PC-9 (cell line): ENCODE measurements at regions of chr17 and their contacts with region 1.

Region 1: GRCh38 chr17:40909351-40909750 is 24.3 kb upstream of the KRT20 start:
- DNase-seq: peak; percentile 79 to 92
- H3K4me3 ChIP-seq: 0 out of 2 replicates have a peak overlapping the region, but pooled peaks have one; percentile 16
- H3K27ac ChIP-seq: peak overlapping the region; percentile 95
- H3K4me1 ChIP-seq: peaks cover 66% of the 10 kb centered on the region
- H3K27me3 ChIP-seq: no peaks in the 10 kb centered on the region
- CTCF ChIP-seq: peak; percentile 86

Region 2: GRCh38 chr17:40615295-40615988 is 293.9 kb before region 1 on chr17:
- CTCF ChIA-PET with region 1: no interaction called
- POLR2A ChIA-PET with region 1: no interaction called
- intact Hi-C with region 1: loop called (anchors 2 kb)
- DNase-seq: peak; percentile 72
- H3K4me3 ChIP-seq: no peak overlapping the region
- H3K27ac ChIP-seq: no peak overlapping the region
- H3K4me1 ChIP-seq: peaks cover 10% of the 10 kb centered on the region
- H3K27me3 ChIP-seq: no peaks in the 10 kb centered on the region
- CTCF ChIP-seq: peak; percentile 73

Region 3: GRCh38 chr17:40854159-40854814 is 55.1 kb before region 1 on chr17:
- CTCF ChIA-PET with region 1: no interaction called
- POLR2A ChIA-PET with region 1: interaction called, 4 read pairs
- intact Hi-C with region 1: loop called (anchors 2 kb)
- DNase-seq: peak in 1 of 2 experiments; percentile 90
- H3K4me3 ChIP-seq: no peak overlapping the region
- H3K27ac ChIP-seq: peak overlapping the region; percentile 94
- H3K4me1 ChIP-seq: peaks cover 72% of the 10 kb centered on the region
- H3K27me3 ChIP-seq: no peaks in the 10 kb centered on the region
- CTCF ChIP-seq: no peak

Region 4: GRCh38 chr17:40952661-40953060 is 43.3 kb after region 1 on chr17:
- CTCF ChIA-PET with region 1: no interaction called
- POLR2A ChIA-PET with region 1: no interaction called
- intact Hi-C with region 1: no loop called
- DNase-seq: peak in 1 of 2 experiments; percentile 92
- H3K4me3 ChIP-seq: no peak overlapping the region
- H3K27ac ChIP-seq: peak overlapping the region; percentile 98
- H3K4me1 ChIP-seq: peaks cover 62% of the 10 kb centered on the region
- H3K27me3 ChIP-seq: no peaks in the 10 kb centered on the region
- CTCF ChIP-seq: no peak

Region 5: DNA sequence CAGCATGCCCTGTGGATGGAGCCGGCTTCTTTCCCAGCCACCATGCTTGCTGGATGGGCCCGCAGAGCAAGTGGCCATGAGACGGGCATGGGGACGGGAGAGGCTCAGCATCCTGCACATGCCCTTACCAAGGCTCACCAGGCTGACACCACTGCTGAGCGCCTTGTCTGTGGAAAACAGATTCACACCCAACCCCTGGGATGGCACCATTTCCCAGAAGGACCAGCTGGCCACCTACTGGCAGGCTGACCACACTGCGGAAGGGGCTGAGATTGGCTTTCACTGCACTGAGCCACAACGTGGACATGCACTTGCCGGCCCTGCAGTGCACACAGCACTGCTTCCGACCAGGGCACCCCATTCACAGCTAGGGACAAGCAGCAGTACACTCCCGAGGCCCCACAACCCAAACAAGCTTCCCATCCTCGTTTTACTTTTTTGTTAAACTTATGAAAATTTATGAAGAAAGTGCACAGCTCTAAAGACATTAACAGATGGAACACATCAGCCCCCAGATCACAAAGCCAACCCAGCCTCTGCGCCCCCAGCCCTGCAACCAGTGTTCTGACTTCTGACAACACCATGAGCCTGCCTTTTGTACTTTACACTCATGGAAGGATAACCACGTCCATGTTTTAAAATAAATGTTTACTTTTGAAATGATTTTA is 420.1 kb after region 1 on chr17:
- CTCF ChIA-PET with region 1: no interaction called
- POLR2A ChIA-PET with region 1: no interaction called
- intact Hi-C with region 1: loop called (anchors 1 kb)
- DNase-seq: peak; percentile 47 to 65
- H3K4me3 ChIP-seq: no peak overlapping the region
- H3K27ac ChIP-seq: no peak overlapping the region
- H3K4me1 ChIP-seq: peaks cover 6% of the 10 kb centered on the region
- H3K27me3 ChIP-seq: no peaks in the 10 kb centered on the region
- CTCF ChIP-seq: peak; percentile 90

Region 6: GRCh38 chr17:41417576-41418015 is 508.2 kb after region 1 on chr17:
- CTCF ChIA-PET with region 1: interaction called, 3 read pairs
- POLR2A ChIA-PET with region 1: no interaction called
- intact Hi-C with region 1: loop called (anchors 5 kb)
- DNase-seq: peak; percentile 69 to 98
- H3K4me3 ChIP-seq: no peak overlapping the region
- H3K27ac ChIP-seq: peak overlapping the region; percentile 89
- H3K4me1 ChIP-seq: peaks cover 76% of the 10 kb centered on the region
- H3K27me3 ChIP-seq: no peaks in the 10 kb centered on the region
- CTCF ChIP-seq: peak; percentile 82

Region 7: DNA sequence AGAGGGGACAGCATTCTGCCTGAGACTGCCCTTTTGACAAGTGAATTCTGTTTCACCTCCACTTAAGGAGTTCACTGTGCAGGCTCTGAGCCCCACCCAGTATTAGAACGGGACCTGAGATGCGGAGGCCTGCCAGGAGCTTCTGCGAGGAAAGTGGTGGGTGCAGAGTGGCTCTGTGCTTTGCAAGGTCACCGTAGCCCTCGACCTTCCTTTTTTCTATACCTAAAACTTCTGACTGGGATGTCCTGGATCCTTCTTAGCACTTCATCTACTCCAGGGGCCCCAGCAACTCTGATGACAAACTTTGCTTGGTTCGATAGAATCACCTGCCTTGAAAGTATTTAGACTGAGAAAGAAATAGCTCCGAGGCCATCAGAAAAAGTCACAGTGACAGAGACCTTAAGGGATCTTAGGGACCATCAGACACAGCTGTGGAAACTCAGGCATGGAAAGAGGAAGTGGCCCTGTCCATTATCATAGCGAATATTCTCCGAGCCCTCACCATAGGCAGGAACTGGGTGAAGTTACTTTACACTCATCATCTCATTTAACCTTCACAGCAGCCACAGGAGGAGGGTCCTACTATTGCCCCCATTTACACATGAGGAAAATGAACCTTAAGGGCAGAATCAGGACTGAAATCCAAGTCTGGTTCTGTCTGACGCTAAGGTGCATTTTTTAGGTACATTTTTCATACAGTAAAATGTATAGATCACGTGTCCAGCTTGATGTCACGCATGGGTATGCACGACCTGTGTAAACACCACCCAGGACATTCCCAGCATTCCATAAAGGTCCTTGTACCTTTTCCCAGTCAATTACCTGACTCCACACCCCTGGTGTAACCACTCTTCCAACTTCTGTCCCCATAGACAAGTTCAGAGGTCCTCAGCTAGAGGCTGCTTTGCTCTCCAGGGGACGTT is 596.7 kb after region 1 on chr17:
- CTCF ChIA-PET with region 1: no interaction called
- POLR2A ChIA-PET with region 1: interaction called, 12 read pairs
- intact Hi-C with region 1: no loop called
- DNase-seq: peak in 1 of 2 experiments; percentile 59
- H3K4me3 ChIP-seq: peak overlapping the region; percentile 58; the same call in 1 of the 2 replicates
- H3K27ac ChIP-seq: peak overlapping the region; percentile 94
- H3K4me1 ChIP-seq: peaks cover 84% of the 10 kb centered on the region
- H3K27me3 ChIP-seq: no peaks in the 10 kb centered on the region
- CTCF ChIP-seq: no peak

Region 8: GRCh38 chr17:41665566-41666236 is 756.4 kb after region 1 on chr17:
- CTCF ChIA-PET with region 1: no interaction called
- POLR2A ChIA-PET with region 1: no interaction called
- intact Hi-C with region 1: loop called (anchors 2 kb)
- DNase-seq: peak; percentile 75 to 90
- H3K4me3 ChIP-seq: peak overlapping the region; percentile 46; the same call in 1 of the 2 replicates
- H3K27ac ChIP-seq: peak overlapping the region; percentile 29; the same call in 1 of the 2 replicates
- H3K4me1 ChIP-seq: peaks cover 26% of the 10 kb centered on the region
- H3K27me3 ChIP-seq: no peaks in the 10 kb centered on the region
- CTCF ChIP-seq: peak; percentile 91